Dorsolateral prefrontal cortex (tissue), 120 donors: ENCODE measurements at regions of chr20 and their contacts with region 1.

Region 1: DNA sequence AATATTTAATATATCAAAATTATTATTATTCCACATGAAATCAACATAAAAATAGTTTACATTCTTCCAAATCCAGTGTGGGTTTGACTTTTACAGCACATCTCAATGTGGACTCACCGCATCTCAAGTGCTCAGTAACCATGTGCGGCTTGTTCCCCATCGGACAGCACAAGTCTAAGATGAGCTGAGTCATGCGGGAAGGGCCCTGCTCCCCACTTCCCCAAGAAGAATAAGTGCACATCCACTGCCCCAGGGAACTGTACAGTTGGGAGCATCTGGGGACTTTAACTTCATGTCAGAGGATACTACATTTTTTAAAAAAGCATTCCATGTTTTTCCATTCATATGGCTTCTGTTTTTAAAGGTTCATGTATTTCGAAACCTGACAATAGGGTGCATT is 325.6 kb downstream of the BTBD3 start:
- DNase-seq: no peak
- H3K4me3 ChIP-seq: no peak overlapping the region
- H3K27ac ChIP-seq: no peak overlapping the region
- H3K27me3 ChIP-seq: no peaks in the 10 kb centered on the region
- CTCF ChIP-seq: no peak

Region 2: DNA sequence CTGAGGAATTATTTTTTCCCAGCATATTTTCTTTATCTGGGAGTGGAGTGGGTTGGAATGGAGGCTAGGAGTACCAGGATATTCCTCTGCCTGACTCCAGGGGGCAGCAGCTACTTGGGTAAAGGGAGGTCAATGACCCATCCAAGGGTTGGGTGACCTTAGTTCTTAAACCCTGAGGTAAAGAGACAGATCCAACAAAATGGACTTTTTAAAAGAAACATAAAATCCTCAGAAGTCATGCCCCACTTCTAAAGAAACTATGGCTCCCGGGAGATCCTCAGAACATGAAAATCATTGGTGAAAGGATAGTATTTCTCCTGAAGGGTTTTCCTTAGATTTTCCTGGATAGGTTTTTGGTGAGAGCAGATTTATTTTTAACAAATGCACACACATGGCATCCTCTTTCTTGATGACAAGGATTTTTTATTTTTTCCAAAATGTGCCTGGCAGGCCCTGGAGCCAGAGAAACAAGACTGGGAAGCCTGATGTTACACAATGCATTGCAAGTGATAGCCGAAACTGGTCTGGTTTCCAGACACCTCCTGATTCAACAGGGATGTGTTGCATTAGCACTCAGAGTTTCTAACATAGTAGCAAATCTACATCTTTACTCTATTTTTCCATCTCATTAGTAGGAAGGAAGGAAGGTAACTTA is 566.6 kb before region 1 on chr20:
- intact Hi-C with region 1: loop called in 1 of 2 experiments (anchors 10 kb)
- DNase-seq: peak in 4 of 10 donors; percentile 24 to 65 (median 50)
- H3K4me3 ChIP-seq: no peak overlapping the region
- H3K27ac ChIP-seq: peak overlapping the region in 5 of 59 donors; percentile 3 to 61 (median 39)
- H3K27me3 ChIP-seq: no peaks in the 10 kb centered on the region
- CTCF ChIP-seq: peak; percentile 52 to 88 (median 74)

Region 3: DNA sequence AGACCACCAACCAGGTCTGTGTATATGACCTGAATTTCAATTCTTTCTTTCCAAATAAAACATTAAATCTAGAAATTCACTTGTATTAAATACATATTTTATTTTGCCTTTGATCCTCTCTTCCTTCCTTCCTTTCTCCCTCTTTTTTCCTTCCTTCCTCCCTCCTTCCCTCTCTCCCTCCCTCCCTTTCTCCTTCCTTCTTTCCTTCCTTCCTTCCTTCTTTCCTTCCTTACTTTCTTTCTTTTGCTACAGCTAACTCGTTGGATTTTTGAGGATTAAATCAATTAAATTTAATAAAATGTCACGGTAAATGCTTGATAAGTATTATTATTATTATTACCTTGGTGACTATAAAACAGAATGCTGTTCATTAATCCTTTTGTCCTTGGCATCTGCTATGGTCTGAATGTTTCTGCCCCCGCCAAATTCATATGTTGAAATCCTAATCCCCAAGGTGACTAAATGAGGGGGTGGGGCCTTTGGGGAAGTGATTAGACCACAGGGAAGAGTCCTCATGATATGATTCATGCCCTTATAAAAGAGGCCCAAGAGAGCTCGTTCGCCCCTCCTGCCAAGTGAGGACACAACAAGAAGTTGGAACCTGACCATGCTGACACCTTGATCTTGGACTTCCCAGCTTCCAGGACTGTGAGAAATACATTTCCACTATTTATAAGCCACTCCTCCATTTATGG is 393.2 kb before region 1 on chr20:
- intact Hi-C with region 1: no loop called
- DNase-seq: no peak
- H3K4me3 ChIP-seq: no peak overlapping the region
- H3K27ac ChIP-seq: no peak overlapping the region
- H3K27me3 ChIP-seq: no peaks in the 10 kb centered on the region
- CTCF ChIP-seq: no peak

Region 4: DNA sequence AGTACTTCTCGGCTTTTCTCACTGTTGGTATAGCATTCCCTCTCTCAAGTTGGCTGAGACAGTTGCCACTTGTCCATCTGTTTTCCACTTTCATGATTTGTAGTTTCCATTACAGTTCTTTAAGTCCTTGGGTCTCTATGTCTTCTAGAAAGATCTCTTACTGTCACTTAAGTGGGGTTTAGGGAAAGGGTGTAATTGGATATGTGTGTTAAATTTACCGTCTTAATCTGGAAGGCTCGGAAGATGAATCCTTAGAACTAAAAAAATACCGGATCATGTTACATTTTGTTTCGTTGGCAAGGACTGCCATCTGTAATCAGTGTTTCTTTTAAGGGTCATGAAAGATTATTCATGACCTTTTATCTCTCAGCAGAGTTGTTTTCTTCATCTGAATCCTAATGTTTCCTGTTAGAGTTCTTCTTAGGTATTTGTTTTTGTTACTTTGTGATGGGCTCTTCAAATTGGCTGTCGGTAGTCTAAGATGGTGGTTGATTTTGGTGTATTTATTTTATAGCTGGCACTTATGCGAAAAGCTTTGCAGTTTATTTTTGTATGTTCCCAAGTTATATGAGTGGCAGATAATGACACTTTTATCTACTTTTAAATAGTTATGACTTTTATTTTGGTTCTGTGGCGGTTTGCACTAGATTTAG is 347.4 kb before region 1 on chr20:
- intact Hi-C with region 1: loop called in 1 of 2 experiments (anchors 5 kb)
- DNase-seq: no peak
- H3K4me3 ChIP-seq: no peak overlapping the region
- H3K27ac ChIP-seq: peak overlapping the region in 4 of 59 donors; percentile 4 to 36 (median 10)
- H3K27me3 ChIP-seq: no peaks in the 10 kb centered on the region
- CTCF ChIP-seq: no peak

Region 5: GRCh38 chr20:11993886-11994461 is 249.4 kb before region 1 on chr20:
- intact Hi-C with region 1: loop called in 1 of 2 experiments (anchors 10 kb)
- DNase-seq: no peak
- H3K4me3 ChIP-seq: no peak overlapping the region
- H3K27ac ChIP-seq: peak overlapping the region in 56 of 59 donors; percentile 2 to 98 (median 92)
- H3K27me3 ChIP-seq: no peaks in the 10 kb centered on the region
- CTCF ChIP-seq: no peak

Region 6: GRCh38 chr20:12394786-12395185 is 151.5 kb after region 1 on chr20:
- intact Hi-C with region 1: no loop called
- DNase-seq: no peak
- H3K4me3 ChIP-seq: no peak overlapping the region
- H3K27ac ChIP-seq: no peak overlapping the region
- H3K27me3 ChIP-seq: no peaks in the 10 kb centered on the region
- CTCF ChIP-seq: no peak